ENCODE measurements at regions of chr15 and their contacts with region 1.

Region 1: DNA sequence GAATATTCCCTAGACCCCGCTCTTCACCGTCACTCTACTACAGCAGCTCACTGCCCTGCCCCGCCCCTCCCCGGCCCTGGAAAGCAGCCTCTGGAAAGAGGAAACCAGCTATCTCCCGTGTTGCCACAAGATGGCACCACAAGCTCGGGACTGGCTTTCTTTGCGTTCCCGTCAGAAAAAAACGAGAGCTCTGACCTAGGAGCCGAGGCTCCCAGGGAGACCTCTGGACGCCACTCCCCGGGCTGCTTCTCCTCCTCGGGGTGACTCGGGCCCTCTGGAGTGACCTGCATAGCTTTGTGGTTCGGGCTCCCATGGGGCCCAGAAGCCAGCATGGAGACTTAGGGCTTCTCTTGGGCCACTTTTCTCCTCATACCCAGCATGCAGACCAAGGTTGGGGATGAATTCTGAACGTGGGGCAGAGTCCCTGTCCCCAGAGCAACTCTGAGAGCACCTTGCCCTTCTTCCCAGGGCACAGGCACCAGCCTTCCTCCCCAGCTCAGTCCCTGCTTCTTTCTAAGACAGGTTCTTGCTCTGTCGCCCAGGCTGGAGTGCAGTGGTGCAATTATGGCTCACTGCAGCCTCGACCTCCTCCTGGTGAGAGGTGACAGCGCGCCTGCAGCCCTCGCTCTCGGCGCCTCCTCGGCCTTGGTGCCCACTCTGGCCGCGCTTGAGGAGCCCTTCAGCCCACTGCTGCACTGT is 19.0 kb downstream of the STOML1 start:
- DNase-seq: peak; percentile 77
- H3K4me3 ChIP-seq: no peak overlapping the region
- H3K27ac ChIP-seq: no peak overlapping the region
- H3K4me1 ChIP-seq: no peaks in the 10 kb centered on the region
- H3K27me3 ChIP-seq: no peaks in the 10 kb centered on the region
- CTCF ChIP-seq: peak; percentile 83 to 94

Region 2: GRCh38 chr15:73994419-73994883 is 21.3 kb after region 1 on chr15 and contains the start of gene PML:
- CTCF ChIA-PET with region 1: interaction called, 10 read pairs
- dilution Hi-C with region 1: no loop called
- in situ Hi-C with region 1: no loop called
- intact Hi-C with region 1: loop called (anchors 2 kb)
- DNase-seq: peak; percentile 94
- H3K4me3 ChIP-seq: peak within 1 kb of the TSS; percentile 78 to 91 (median 83)
- H3K27ac ChIP-seq: peak within 1 kb of the TSS; percentile 72
- H3K4me1 ChIP-seq: peaks cover 41% of the 10 kb centered on the region
- H3K27me3 ChIP-seq: no peaks in the 10 kb centered on the region
- CTCF ChIP-seq: no peak
- total RNA-seq, gene PML: 38.7 to 55.5 TPM

Region 3: GRCh38 chr15:74053941-74054529 is 80.9 kb after region 1 on chr15:
- CTCF ChIA-PET with region 1: interaction called, 12 read pairs
- dilution Hi-C with region 1: no loop called
- in situ Hi-C with region 1: no loop called
- intact Hi-C with region 1: no loop called
- DNase-seq: peak; percentile 47
- H3K4me3 ChIP-seq: no peak overlapping the region
- H3K27ac ChIP-seq: no peak overlapping the region
- H3K4me1 ChIP-seq: peaks cover 24% of the 10 kb centered on the region
- H3K27me3 ChIP-seq: no peaks in the 10 kb centered on the region
- CTCF ChIP-seq: peak; percentile 36 to 77

Region 4: GRCh38 chr15:74179341-74179841 is 206.3 kb after region 1 on chr15:
- CTCF ChIA-PET with region 1: interaction called, 14 read pairs
- dilution Hi-C with region 1: no loop called
- in situ Hi-C with region 1: no loop called
- intact Hi-C with region 1: no loop called
- DNase-seq: peak; percentile 70
- H3K4me3 ChIP-seq: no peak overlapping the region
- H3K27ac ChIP-seq: no peak overlapping the region
- H3K4me1 ChIP-seq: peaks cover 17% of the 10 kb centered on the region
- H3K27me3 ChIP-seq: no peaks in the 10 kb centered on the region
- CTCF ChIP-seq: no peak

Region 5: GRCh38 chr15:74307827-74308644 is 334.9 kb after region 1 on chr15:
- CTCF ChIA-PET with region 1: interaction called, 13 read pairs
- dilution Hi-C with region 1: loop called (anchors 25 kb)
- in situ Hi-C with region 1: no loop called
- intact Hi-C with region 1: loop called (anchors 1 kb)
- DNase-seq: peak; percentile 58
- H3K4me3 ChIP-seq: no peak overlapping the region
- H3K27ac ChIP-seq: no peak overlapping the region
- H3K4me1 ChIP-seq: peaks cover 12% of the 10 kb centered on the region
- H3K27me3 ChIP-seq: no peaks in the 10 kb centered on the region
- CTCF ChIP-seq: peak; percentile 75 to 92